ENCODE measurements at regions of chr12 and their contacts with region 1.

Region 1: GRCh38 chr12:93390549-93391297 is 13.0 kb downstream of the NUDT4 start:
- DNase-seq: no peak
- ATAC-seq: no peak
- H3K4me3 ChIP-seq: no peak overlapping the region
- H3K4me1 ChIP-seq: no peaks in the 10 kb centered on the region
- CTCF ChIP-seq: no peak

Region 2: DNA sequence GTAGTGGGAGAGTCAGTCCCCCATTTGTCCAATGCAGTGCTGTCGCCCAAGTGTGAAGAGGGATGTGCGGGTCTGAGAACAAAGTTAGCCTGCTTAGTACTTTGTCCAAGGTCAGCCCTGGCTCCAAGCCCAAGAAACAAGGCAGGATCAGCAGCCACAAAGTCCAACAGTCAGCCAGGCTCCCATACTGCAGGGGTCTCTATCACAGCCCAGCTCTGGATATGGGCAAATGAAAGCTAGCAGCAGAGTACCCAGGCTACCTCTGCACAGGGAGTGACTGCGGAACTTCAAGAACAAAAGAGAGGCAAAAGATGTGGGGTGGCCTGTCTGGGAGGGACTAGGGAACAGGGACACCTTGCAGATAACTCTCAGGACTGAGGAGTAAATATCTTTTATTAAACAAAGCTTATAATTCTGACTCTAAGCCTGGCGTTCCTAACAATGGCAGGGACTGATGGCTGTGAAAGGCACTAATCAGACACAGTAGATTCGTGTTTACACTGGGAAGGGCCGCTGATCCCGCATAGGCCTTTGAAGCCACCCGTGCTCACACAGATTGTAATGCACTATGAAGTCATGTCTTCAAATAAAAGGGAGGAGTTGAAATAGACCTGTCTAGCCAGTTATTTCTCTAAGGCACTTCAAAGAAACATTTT is 370.6 kb before region 1 on chr12:
- intact Hi-C with region 1: loop called in 1 of 2 experiments (anchors 10 kb)
- DNase-seq: peak; percentile 69 to 81 (median 74)
- ATAC-seq: peak; percentile 85
- H3K4me3 ChIP-seq: no peak overlapping the region
- H3K4me1 ChIP-seq: peaks cover 33% of the 10 kb centered on the region
- CTCF ChIP-seq: no peak

Region 3: GRCh38 chr12:93634416-93634815 is 243.7 kb after region 1 on chr12:
- intact Hi-C with region 1: no loop called
- DNase-seq: no peak
- ATAC-seq: no peak
- H3K4me3 ChIP-seq: no peak overlapping the region
- H3K4me1 ChIP-seq: no peaks in the 10 kb centered on the region
- CTCF ChIP-seq: no peak

Measured in mucosa of descending colon (tissue), 3 donors.